Thyroid gland (tissue), 4 donors: ENCODE measurements at regions of chr12 and their contacts with region 1.

Region 1: GRCh38 chr12:12890815-12891645 is at the start of gene GPRC5A:
- DNase-seq: peak; percentile 97 to 98
- H3K4me3 ChIP-seq: peak within 1 kb of the TSS; percentile 27 to 47 (median 38)
- H3K27ac ChIP-seq: peak within 1 kb of the TSS; percentile 88 to 98 (median 94)
- H3K4me1 ChIP-seq: peaks cover 10 to 24% of the 10 kb centered on the region in 2 donors
- H3K27me3 ChIP-seq: no peaks in the 10 kb centered on the region
- CTCF ChIP-seq: peak in 3 of 6 experiments; percentile 10 to 19 (median 13)
- POLR2A ChIP-seq: peak; percentile 97 to 98
- total RNA-seq, gene GPRC5A: 107 to 207 (median 128) TPM

Region 2: DNA sequence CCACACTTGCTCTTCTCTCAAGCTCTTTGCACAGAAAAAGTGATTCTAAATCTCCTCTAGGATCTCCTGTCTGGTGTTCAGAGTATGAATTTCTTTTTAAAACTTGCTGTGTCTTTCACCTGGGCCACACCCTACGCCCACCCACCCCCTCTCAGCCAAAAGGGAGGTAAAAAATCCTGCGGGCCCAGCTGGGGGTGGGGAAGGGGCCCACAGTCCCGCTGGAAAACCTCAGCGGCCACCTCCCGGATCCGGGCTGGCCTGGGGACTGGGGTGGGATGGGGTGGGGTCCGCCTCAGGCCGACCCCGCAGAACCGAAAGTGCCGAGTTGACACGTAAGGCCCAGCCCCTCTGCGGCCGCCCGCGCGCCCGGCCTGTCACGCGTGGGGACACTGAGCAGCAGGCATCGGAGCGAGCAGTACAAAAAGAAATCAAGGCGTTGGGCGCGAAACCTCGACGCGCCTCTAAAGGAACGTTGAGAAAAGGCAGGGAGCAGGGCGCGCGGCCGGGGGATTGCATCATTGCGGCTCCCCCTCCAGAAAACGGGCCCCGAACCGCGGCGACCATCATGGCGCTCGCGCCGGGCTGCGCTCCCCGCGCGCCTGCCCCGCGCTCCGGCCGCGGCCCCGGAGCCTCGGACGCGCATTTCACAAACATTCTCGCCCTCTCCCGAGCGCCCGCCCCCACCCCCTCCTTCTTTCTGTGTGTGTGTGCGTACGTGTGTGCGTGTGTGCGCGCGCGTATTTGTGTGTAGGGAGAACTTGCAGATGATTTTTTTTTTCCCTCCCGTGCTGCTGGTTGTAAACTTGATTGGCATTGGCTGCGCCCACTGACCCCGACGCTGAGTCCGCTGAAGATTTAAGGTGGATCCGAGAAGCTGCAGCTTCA is 166.1 kb before region 1 on chr12:
- intact Hi-C with region 1: loop called (anchors 10 kb)
- DNase-seq: peak; percentile 94 to 95
- H3K4me3 ChIP-seq: peak overlapping the region; percentile 46 to 79 (median 70)
- H3K27ac ChIP-seq: peak overlapping the region; percentile 98 to 100 (median 100)
- H3K4me1 ChIP-seq: peaks cover 5 to 25% of the 10 kb centered on the region in 2 donors
- H3K27me3 ChIP-seq: no peaks in the 10 kb centered on the region
- CTCF ChIP-seq: peak in 1 of 6 experiments; percentile 7
- POLR2A ChIP-seq: peak in 1 of 2 donors; percentile 88

Region 3: DNA sequence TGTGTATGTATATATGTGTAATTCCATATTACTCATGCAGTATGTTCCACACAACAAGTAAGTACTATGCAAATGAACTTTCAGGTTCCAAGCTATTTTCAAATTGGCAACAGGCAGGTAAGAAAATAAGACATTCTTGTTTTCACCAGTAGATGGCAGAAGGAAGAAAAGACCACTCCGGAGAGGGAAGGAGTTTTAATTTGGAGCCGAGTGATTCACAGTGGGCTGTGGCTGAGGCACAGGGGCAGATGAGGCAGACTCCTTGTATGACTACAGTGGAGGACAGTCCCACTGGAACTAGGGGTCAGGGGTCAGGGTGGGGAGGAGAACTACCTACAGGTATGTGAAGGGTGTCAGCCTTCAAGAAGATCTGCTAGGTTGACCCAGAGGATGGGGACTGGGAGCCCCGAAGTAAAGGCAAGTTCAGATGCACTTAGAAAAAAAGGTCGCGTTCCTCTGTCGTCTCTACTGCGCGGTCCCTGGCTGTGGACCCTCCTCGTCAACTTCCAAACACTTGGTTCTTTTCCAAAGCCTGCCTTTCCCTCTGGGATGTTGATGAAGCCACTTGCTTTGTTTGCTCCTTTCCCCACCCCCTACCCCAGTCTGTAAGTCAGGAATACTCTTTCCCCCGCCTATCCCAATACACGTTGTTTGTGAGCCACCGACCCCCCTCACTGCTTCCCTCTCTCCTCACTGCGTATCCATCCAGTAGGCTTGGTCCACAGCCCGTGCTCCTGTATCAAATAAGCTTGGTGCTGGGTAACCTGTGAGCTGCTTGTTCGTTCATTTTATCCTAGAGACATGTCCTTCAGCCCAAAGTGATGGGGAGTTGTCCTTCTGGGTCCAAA is 53.8 kb before region 1 on chr12:
- intact Hi-C with region 1: loop called (anchors 5 kb)
- DNase-seq: peak; percentile 46 to 51
- H3K4me3 ChIP-seq: no peak overlapping the region
- H3K27ac ChIP-seq: peak overlapping the region; percentile 95 to 97 (median 97)
- H3K4me1 ChIP-seq: peaks cover 35 to 52% of the 10 kb centered on the region in 2 donors
- H3K27me3 ChIP-seq: no peaks in the 10 kb centered on the region
- CTCF ChIP-seq: peak in 5 of 6 experiments; percentile 23 to 83 (median 66)
- POLR2A ChIP-seq: peak in 1 of 2 donors; percentile 30

Region 4: DNA sequence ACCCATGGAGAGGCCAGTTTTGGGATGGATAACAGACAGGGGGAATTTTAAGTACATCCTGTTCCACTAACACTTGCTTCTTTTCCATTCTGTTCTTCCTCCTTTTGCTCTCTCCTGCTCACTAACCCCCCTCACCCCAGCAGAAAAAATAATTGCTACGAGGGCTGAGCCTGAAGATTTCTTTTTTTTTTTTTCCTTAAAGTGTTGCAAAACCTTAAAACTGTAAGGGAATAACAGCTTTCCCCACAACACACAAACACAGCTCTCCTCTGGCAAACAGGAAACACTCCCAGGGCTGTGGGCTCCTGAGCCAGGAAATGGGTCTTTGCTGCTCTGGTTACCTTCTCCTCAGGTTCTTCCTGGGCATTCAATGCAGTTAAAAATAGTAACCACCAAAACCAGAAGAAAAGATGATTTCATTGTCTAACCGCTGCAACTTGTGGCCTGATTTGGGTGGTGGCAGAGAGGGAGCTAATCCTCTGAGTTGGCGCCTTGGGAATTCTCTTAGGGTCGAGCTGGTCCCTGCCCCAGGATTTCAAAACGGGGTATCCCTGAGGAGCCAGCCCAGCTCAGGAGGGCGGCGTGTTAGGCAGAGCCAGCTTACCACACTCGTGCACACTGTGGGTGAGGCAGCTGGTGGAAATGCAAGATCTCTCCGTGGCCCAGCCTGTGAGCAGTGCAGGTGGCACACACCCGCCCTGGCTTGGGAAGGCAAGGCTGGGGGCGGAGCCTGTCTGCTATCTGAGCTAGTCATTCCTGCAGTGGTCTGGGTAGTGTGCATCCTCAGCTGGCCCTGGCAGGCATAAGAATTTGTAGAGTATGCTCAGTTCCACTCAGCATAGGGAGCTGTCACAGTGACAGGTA is 288.4 kb after region 1 on chr12:
- intact Hi-C with region 1: no loop called
- DNase-seq: peak; percentile 62 to 64
- H3K4me3 ChIP-seq: no peak overlapping the region
- H3K27ac ChIP-seq: peak overlapping the region; percentile 22 to 59 (median 54)
- H3K4me1 ChIP-seq: peaks cover 11 to 35% of the 10 kb centered on the region in 2 donors
- H3K27me3 ChIP-seq: no peaks in the 10 kb centered on the region
- CTCF ChIP-seq: no peak
- POLR2A ChIP-seq: no peak